HepG2 (cell line): ENCODE measurements at regions of chrX and their contacts with region 1.

Region 1: DNA sequence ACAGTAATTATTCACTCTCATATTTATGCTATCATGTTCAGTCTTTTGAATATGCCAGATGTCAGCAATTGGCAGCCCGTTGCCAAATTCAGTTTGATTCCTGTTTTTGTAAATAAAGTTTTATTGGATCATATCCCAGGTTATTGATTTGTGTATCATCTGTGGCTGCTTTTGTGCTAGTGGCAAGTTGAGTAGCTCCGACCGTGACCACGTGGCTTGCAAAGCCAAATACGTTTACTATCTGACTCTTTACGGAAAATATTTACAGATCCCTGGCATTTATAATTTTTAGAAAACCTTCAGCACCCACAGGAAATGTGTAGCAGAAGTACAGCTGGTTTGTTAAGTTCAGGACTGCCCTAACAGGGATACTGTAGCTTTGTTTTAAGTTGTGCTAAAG is 67.4 kb downstream of the VCX2 start:
- DNase-seq: no peak
- ATAC-seq: no peak
- H3K4me3 ChIP-seq: no peak overlapping the region
- H3K27ac ChIP-seq: no peak overlapping the region
- H3K4me1 ChIP-seq: no peaks in the 10 kb centered on the region
- H3K27me3 ChIP-seq: no peaks in the 10 kb centered on the region
- CTCF ChIP-seq: no peak
- EP300 ChIP-seq: no peak
- POLR2A ChIP-seq: no peak
- RAD21 ChIP-seq: no peak

Region 2: DNA sequence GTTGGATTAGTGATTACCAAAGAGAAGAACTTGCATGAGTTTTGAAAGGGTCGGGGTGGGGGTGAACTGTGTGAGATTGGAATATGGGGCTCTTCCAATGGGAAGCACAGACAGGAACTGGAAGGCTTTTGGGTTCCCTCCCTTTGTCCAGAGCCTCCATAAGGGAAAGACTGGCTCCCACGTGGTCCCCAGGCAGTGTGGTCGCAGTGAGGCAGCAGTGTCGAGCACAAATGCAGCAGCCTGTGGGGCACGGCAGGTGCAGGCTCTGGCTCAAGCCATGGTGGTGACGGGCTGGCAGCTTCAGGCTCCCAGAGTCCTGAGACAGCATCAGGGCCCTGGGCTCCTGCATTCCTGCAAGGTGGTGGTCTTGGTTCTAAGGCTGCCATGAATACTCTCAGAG is 21.9 kb after region 1 on chrX:
- CTCF ChIA-PET with region 1: no interaction called
- POLR2A ChIA-PET with region 1: no interaction called
- in situ Hi-C with region 1: no loop called
- intact Hi-C with region 1: no loop called
- DNase-seq: no peak
- ATAC-seq: no peak
- H3K4me3 ChIP-seq: no peak overlapping the region
- H3K27ac ChIP-seq: no peak overlapping the region
- H3K4me1 ChIP-seq: no peaks in the 10 kb centered on the region
- H3K27me3 ChIP-seq: no peaks in the 10 kb centered on the region
- CTCF ChIP-seq: no peak
- EP300 ChIP-seq: no peak
- POLR2A ChIP-seq: no peak
- RAD21 ChIP-seq: no peak

Region 3: GRCh38 chrX:8139716-8140115 is 36.1 kb after region 1 on chrX:
- CTCF ChIA-PET with region 1: no interaction called
- POLR2A ChIA-PET with region 1: no interaction called
- in situ Hi-C with region 1: no loop called
- intact Hi-C with region 1: loop called (anchors 1 kb)
- DNase-seq: no peak
- ATAC-seq: no peak
- H3K4me3 ChIP-seq: no peak overlapping the region
- H3K27ac ChIP-seq: no peak overlapping the region
- H3K4me1 ChIP-seq: no peaks in the 10 kb centered on the region
- H3K27me3 ChIP-seq: no peaks in the 10 kb centered on the region
- CTCF ChIP-seq: no peak
- EP300 ChIP-seq: no peak
- POLR2A ChIP-seq: no peak
- RAD21 ChIP-seq: no peak

Region 4: DNA sequence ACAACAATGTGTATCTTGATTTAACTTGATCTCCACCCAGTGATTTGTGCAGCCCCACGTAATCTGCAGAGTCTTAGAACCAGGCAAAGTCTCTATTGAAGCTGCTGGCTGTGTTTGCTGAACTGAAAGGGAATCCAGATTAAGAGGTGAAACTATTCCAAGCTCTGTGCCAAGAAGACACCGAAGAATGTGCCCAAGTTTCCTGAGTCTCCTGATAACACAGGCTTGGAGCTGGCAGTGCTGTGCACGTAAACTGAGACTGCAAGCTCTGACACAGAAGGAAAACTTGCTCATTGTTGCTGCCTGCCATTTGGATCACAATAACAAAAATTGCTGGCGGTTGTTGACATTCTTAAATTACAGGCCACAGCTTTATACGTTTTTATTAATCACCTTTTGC is 300.8 kb after region 1 on chrX:
- CTCF ChIA-PET with region 1: no interaction called
- POLR2A ChIA-PET with region 1: no interaction called
- in situ Hi-C with region 1: no loop called
- intact Hi-C with region 1: no loop called
- DNase-seq: no peak
- ATAC-seq: no peak
- H3K4me3 ChIP-seq: no peak overlapping the region
- H3K27ac ChIP-seq: no peak overlapping the region
- H3K4me1 ChIP-seq: no peaks in the 10 kb centered on the region
- H3K27me3 ChIP-seq: no peaks in the 10 kb centered on the region
- CTCF ChIP-seq: no peak
- EP300 ChIP-seq: no peak
- POLR2A ChIP-seq: no peak
- RAD21 ChIP-seq: no peak

Region 5: DNA sequence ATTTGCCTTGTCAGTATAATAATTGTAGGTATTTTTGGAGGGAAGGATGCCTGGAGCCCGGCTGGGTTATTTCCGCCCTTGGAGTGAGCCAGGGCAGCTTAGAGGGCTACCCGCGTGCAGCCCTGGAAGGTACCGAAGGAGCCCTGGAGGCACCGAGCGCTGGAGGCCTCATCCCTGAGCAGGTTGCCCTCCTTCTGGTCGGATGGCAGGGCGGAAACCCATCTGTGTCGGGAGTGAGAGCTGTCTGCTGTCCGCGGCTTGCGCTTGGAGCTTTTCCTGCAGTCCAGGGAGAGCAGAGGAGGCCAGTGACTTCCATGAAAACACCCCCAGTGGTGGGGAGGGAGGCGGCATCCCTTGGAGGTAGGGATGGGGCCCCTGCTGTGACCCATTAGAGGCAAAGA is 1483.3 kb after region 1 on chrX:
- CTCF ChIA-PET with region 1: no interaction called
- POLR2A ChIA-PET with region 1: no interaction called
- in situ Hi-C with region 1: no loop called
- intact Hi-C with region 1: no loop called
- DNase-seq: no peak
- ATAC-seq: no peak
- H3K4me3 ChIP-seq: no peak overlapping the region
- H3K27ac ChIP-seq: no peak overlapping the region
- H3K4me1 ChIP-seq: no peaks in the 10 kb centered on the region
- H3K27me3 ChIP-seq: no peaks in the 10 kb centered on the region
- CTCF ChIP-seq: no peak
- EP300 ChIP-seq: no peak
- POLR2A ChIP-seq: no peak
- RAD21 ChIP-seq: no peak